Left cardiac atrium (tissue), 4 donors: ENCODE measurements at regions of chr14 and their contacts with region 1.

Region 1: GRCh38 chr14:100383727-100384158 is 60.6 kb downstream of the SLC25A47 start:
- DNase-seq: peak; percentile 63
- ATAC-seq: peak; percentile 66 to 70

Region 2: GRCh38 chr14:100330388-100330931 is 53.3 kb before region 1 on chr14:
- intact Hi-C with region 1: no loop called
- DNase-seq: no peak
- ATAC-seq: no peak

Region 3: DNA sequence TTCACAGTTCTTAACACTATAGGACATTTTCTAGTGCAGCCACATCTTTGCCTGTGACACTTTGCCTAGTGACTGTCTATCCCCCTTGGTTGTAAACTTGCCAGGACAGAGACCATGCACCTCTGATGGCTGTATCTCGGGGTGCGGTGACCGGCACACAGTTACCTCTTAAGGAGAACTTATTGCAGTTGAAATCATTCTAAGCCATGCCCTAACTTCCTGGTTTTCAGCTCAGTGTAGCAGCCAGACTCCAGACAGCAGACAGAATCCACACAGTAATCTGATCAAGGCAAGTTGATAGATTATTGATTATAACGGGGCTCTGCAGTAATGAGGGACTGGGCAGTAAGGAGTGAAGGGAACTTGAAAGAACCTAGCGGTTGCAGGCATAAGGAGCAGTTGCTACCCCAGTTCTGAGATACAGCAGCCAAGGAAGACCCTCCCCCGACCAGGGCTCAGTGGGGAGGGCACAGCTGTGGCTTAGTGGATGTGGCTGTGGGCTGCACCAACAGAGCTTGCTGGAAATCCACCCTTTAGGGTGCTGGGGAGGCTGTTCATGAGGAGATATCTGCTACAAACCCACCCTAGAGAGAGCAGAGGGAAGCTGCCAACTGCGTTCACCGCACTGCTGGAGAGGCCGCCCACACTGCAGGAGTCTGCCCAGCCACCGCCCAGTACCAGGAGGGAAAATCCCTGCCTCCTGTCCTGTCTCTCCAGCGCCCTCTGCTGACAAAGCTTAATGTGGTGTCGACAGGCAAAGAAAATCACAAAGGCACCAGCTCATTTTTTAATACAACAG is 261.6 kb after region 1 on chr14:
- intact Hi-C with region 1: loop called (anchors 5 kb)
- DNase-seq: peak; percentile 86
- ATAC-seq: peak; percentile 93 to 96

Region 4: DNA sequence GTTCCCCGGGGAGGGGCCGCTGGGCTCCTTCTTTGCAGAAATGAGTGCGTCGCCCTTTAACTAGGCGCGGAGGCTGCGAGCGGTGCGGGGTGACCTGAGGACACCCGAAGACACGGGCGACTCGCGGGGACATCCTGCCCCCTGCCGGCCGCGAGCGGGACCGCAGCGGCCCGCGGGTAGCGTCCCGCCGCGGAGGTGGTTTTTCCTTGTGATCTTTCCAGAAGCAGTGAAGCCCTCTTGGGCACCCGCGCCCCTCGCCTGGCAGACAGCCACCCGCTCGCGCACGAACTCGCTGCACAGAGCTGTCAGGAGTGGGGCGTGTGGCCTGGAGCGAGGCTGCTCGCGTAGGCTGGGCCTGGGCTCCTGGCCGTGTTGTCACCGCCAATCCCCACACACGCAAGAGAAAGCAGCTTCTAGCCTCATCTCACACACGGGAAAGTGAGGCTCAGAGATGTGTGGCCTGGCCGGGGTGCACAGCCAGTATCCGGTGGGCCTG is 1244.8 kb after region 1 on chr14:
- intact Hi-C with region 1: loop called (anchors 2 to 5 kb)
- DNase-seq: peak; percentile 81
- ATAC-seq: peak; percentile 92 to 93